Naive thymus-derived CD4-positive, alpha-beta T cell (primary cell): ENCODE measurements at regions of chr7 and their contacts with region 1.

Region 1: DNA sequence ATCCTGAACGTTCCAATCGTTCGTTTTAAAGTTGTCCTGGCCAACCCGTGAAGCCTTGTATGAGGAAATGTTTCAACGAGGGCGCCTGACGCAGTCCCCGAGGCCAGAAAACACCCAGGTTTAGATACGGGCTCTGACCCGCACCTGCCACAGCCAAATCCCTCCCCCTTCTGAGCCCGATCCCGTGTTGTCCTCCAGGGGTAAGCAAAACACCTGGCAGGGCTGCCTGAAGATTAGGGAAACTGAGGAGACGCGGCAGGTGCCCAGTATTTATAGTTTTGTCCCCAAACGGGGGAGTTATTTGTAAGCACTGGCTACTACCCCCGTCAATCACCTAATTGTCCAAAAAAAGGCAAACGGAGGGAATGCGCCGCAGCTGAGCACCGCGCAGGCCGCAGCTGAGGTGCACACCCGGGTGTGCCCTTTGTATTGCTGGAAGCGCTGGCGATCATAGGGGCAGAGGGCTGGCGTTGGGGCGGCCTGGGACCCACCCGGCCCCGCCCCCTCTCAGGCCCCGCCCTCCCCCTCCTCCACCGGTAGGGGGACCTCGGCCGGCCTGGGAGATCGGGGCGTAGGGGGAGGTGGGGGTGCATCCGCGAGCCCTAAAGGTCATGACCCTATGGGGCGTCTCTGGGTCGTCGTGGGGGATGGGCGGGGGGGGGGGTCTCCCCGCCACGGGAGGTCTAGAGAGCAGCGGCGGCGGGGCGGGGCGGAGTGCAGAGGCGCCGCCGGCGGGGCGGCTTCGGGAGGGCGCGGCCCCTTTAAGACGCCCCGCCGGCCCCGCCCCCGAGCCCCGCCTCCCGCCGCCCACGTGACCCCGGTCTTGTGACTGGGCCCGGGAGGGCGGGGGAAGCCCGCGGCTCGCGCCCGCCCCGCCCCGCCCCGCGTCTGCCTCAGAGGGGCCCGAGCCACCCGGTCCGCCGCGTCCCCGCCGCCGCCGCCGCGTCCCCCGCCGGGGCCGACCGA is at the start of gene BRI3:
- DNase-seq: peak; percentile 73 to 93 (median 85)
- ATAC-seq: peak; percentile 87
- H3K4me3 ChIP-seq: peak within 1 kb of the TSS; percentile 96
- H3K4me3 Mint-ChIP-seq: peak within 1 kb of the TSS; percentile 85 to 91 (median 88)
- H3K27ac ChIP-seq: peak within 1 kb of the TSS; percentile 92
- H3K27ac Mint-ChIP-seq: peak within 1 kb of the TSS; percentile 83 to 94 (median 88)
- H3K4me1 ChIP-seq: peaks cover 10 to 30% of the 10 kb centered on the region in 2 donors
- H3K4me1 Mint-ChIP-seq: peaks cover 20 to 40% (median 30%) of the 10 kb centered on the region in 7 donors
- H3K27me3 ChIP-seq: no peaks in the 10 kb centered on the region
- H3K27me3 Mint-ChIP-seq: no peaks in the 10 kb centered on the region
- total RNA-seq, gene BRI3: 73.1 to 194 (median 86.5) TPM

Region 2: GRCh38 chr7:97872025-97872669 is 408.9 kb before region 1 on chr7 and contains the start of gene ASNS:
- CTCF ChIA-PET with region 1: no interaction called
- POLR2A ChIA-PET with region 1: no interaction called
- intact Hi-C with region 1: loop called (anchors 1 to 10 kb)
- DNase-seq: peak; percentile 59 to 92 (median 82)
- ATAC-seq: peak; percentile 92
- H3K4me3 ChIP-seq: peak within 1 kb of the TSS; percentile 79
- H3K4me3 Mint-ChIP-seq: peak within 1 kb of the TSS; percentile 87 to 92 (median 91)
- H3K27ac ChIP-seq: peak within 1 kb of the TSS; percentile 76
- H3K27ac Mint-ChIP-seq: peak within 1 kb of the TSS; percentile 66 to 93 (median 91)
- H3K4me1 ChIP-seq: peaks cover 0 to 15% of the 10 kb centered on the region in 2 donors
- H3K4me1 Mint-ChIP-seq: peaks cover 9 to 26% (median 15%) of the 10 kb centered on the region in 7 donors
- H3K27me3 ChIP-seq: no peaks in the 10 kb centered on the region
- H3K27me3 Mint-ChIP-seq: no peaks in the 10 kb centered on the region
- total RNA-seq, gene ASNS: 23.1 to 49.3 (median 31.8) TPM

Region 3: DNA sequence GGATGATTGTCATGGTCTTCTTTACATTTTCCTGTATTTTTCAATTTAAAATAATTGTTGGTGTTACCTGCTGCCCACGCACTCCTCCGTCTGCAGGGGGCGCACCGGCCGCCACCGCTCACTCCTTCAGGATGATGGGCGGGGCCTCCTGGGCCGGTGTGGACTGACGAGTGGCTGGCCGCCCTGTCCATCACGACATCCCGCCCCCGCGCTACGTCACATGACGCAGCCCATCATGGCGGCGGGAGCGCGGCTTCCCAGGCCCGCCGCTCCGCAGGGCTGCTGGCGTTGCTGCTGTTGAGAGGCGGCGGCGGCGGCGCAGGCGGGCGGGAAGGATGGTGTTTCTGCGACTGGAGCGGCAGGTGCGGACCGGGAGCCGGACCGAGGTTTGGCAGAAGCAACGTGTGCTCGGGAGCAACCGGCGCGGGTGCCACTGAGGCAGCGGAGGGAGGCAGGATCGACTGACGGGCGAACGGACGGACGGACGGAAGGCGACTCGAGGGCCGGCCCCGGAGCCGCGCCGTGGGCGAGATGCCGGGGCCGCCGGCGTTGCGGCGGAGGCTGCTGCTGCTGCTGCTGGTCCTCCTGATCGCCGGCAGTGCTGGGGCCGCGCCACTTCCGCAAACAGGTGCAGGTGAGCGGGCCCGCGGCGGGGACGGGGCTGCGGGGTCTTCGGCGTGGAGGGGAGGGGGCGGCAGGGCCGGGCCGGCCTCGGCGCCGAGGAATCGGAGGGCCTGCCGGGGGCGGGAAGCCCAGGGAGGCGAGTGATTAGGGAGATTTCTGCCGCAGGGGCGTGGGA is 174.2 kb before region 1 on chr7 and contains the start of gene LMTK2:
- CTCF ChIA-PET with region 1: no interaction called
- POLR2A ChIA-PET with region 1: no interaction called
- intact Hi-C with region 1: loop called (anchors 1 kb)
- DNase-seq: peak; percentile 92 to 100 (median 97)
- ATAC-seq: peak; percentile 100
- H3K4me3 ChIP-seq: peak within 1 kb of the TSS; percentile 66
- H3K4me3 Mint-ChIP-seq: peak within 1 kb of the TSS; percentile 90 to 99 (median 96)
- H3K27ac ChIP-seq: peak within 1 kb of the TSS; percentile 92
- H3K27ac Mint-ChIP-seq: peak within 1 kb of the TSS; percentile 22 to 97 (median 89)
- H3K4me1 ChIP-seq: peaks cover 10 to 26% of the 10 kb centered on the region in 2 donors
- H3K4me1 Mint-ChIP-seq: peaks cover 23 to 51% (median 48%) of the 10 kb centered on the region in 7 donors
- H3K27me3 ChIP-seq: no peaks in the 10 kb centered on the region
- H3K27me3 Mint-ChIP-seq: peaks cover 0 to 12% (median 7%) of the 10 kb centered on the region in 5 donors
- total RNA-seq, gene LMTK2: 13.2 to 29.1 (median 25.9) TPM

Region 4: GRCh38 chr7:98266840-98267239 is 14.2 kb before region 1 on chr7:
- CTCF ChIA-PET with region 1: interaction called, 4 read pairs
- POLR2A ChIA-PET with region 1: interaction called, 4 read pairs
- intact Hi-C with region 1: loop called in 1 of 2 experiments (anchors 2 kb)
- DNase-seq: no peak
- ATAC-seq: peak; percentile 66
- H3K4me3 ChIP-seq: no peak overlapping the region
- H3K4me3 Mint-ChIP-seq: no peak overlapping the region
- H3K27ac ChIP-seq: no peak overlapping the region
- H3K27ac Mint-ChIP-seq: peak overlapping the region in 4 of 9 donors; percentile 20 to 43 (median 31)
- H3K4me1 ChIP-seq: no peaks in the 10 kb centered on the region
- H3K4me1 Mint-ChIP-seq: peaks cover 6 to 17% (median 15%) of the 10 kb centered on the region in 7 donors
- H3K27me3 ChIP-seq: no peaks in the 10 kb centered on the region
- H3K27me3 Mint-ChIP-seq: no peaks in the 10 kb centered on the region

Region 5: GRCh38 chr7:98323597-98324322 is 42.7 kb after region 1 on chr7:
- CTCF ChIA-PET with region 1: no interaction called
- POLR2A ChIA-PET with region 1: no interaction called
- intact Hi-C with region 1: no loop called
- DNase-seq: no peak
- ATAC-seq: no peak
- H3K4me3 ChIP-seq: no peak overlapping the region
- H3K4me3 Mint-ChIP-seq: peak overlapping the region in 2 of 10 donors; percentile 46 to 50
- H3K27ac ChIP-seq: no peak overlapping the region
- H3K27ac Mint-ChIP-seq: no peak overlapping the region
- H3K4me1 ChIP-seq: no peaks in the 10 kb centered on the region
- H3K4me1 Mint-ChIP-seq: no peaks in the 10 kb centered on the region
- H3K27me3 ChIP-seq: no peaks in the 10 kb centered on the region
- H3K27me3 Mint-ChIP-seq: peaks cover 0 to 14% (median 10%) of the 10 kb centered on the region in 5 donors

Region 6: GRCh38 chr7:98878365-98879165 is 597.5 kb after region 1 on chr7 and contains the start of gene TRRAP:
- CTCF ChIA-PET with region 1: no interaction called
- POLR2A ChIA-PET with region 1: no interaction called
- intact Hi-C with region 1: loop called (anchors 1 to 2 kb)
- DNase-seq: peak; percentile 63 to 87 (median 82)
- ATAC-seq: peak; percentile 82
- H3K4me3 ChIP-seq: peak within 1 kb of the TSS; percentile 95
- H3K4me3 Mint-ChIP-seq: peak within 1 kb of the TSS; percentile 90 to 99 (median 95)
- H3K27ac ChIP-seq: peak within 1 kb of the TSS; percentile 88
- H3K27ac Mint-ChIP-seq: peak within 1 kb of the TSS; percentile 87 to 98 (median 94)
- H3K4me1 ChIP-seq: peaks cover 9 to 14% of the 10 kb centered on the region in 2 donors
- H3K4me1 Mint-ChIP-seq: peaks cover 0 to 37% (median 26%) of the 10 kb centered on the region in 7 donors
- H3K27me3 ChIP-seq: no peaks in the 10 kb centered on the region
- H3K27me3 Mint-ChIP-seq: peaks cover 0 to 3% (median 0%) of the 10 kb centered on the region in 5 donors
- total RNA-seq, gene TRRAP: 59.1 to 72.3 (median 66.8) TPM